ENCODE measurements at regions of chr17 and their contacts with region 1.

Region 1: GRCh38 chr17:32783602-32784001 is 93.3 kb downstream of the MYO1D start:
- DNase-seq: peak; percentile 75
- H3K4me3 ChIP-seq: no peak overlapping the region
- H3K27ac ChIP-seq: no peak overlapping the region
- H3K4me1 ChIP-seq: peaks cover 4% of the 10 kb centered on the region
- H3K27me3 ChIP-seq: no peaks in the 10 kb centered on the region
- CTCF ChIP-seq: peak; percentile 37 to 53
- POLR2A ChIP-seq: no peak

Region 2: GRCh38 chr17:32596628-32597027 is 187.0 kb before region 1 on chr17:
- CTCF ChIA-PET with region 1: no interaction called
- POLR2A ChIA-PET with region 1: no interaction called
- dilution Hi-C with region 1: no loop called
- intact Hi-C with region 1: no loop called
- DNase-seq: no peak
- H3K4me3 ChIP-seq: no peak overlapping the region
- H3K27ac ChIP-seq: no peak overlapping the region
- H3K4me1 ChIP-seq: no peaks in the 10 kb centered on the region
- H3K27me3 ChIP-seq: no peaks in the 10 kb centered on the region
- CTCF ChIP-seq: no peak
- POLR2A ChIP-seq: no peak

Region 3: GRCh38 chr17:32769839-32770238 is 13.8 kb before region 1 on chr17:
- CTCF ChIA-PET with region 1: interaction called, 29 read pairs
- POLR2A ChIA-PET with region 1: no interaction called
- dilution Hi-C with region 1: no loop called
- intact Hi-C with region 1: no loop called
- DNase-seq: no peak
- H3K4me3 ChIP-seq: no peak overlapping the region
- H3K27ac ChIP-seq: no peak overlapping the region
- H3K4me1 ChIP-seq: peaks cover 24% of the 10 kb centered on the region
- H3K27me3 ChIP-seq: no peaks in the 10 kb centered on the region
- CTCF ChIP-seq: no peak
- POLR2A ChIP-seq: no peak

Region 4: GRCh38 chr17:32803544-32803943 is 19.9 kb after region 1 on chr17:
- CTCF ChIA-PET with region 1: interaction called, 21 read pairs
- POLR2A ChIA-PET with region 1: no interaction called
- dilution Hi-C with region 1: no loop called
- intact Hi-C with region 1: no loop called
- DNase-seq: peak; percentile 89
- H3K4me3 ChIP-seq: no peak overlapping the region
- H3K27ac ChIP-seq: peak overlapping the region; percentile 63
- H3K4me1 ChIP-seq: peaks cover 84% of the 10 kb centered on the region
- H3K27me3 ChIP-seq: no peaks in the 10 kb centered on the region
- CTCF ChIP-seq: no peak
- POLR2A ChIP-seq: no peak

Region 5: DNA sequence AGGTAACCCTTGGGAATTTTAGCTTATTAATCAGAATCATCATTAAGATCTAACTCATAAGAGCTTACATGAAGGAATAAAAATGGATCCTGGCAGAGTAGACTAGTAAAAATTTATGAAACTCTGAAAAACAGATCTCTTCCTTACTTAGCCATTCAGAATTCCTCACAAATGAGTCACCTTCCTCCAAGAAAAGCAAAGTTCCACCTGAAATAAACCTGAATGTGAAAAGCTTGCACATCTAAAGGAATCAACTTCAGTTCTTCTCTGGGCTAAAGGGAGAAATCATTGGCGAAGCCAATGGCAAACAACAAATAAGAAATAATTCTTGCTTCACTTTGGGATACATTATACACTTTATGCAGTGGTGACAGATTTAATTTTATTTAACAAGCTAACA is 70.6 kb after region 1 on chr17:
- CTCF ChIA-PET with region 1: interaction called, 10 read pairs
- POLR2A ChIA-PET with region 1: no interaction called
- dilution Hi-C with region 1: no loop called
- intact Hi-C with region 1: no loop called
- DNase-seq: peak; percentile 74
- H3K4me3 ChIP-seq: peak overlapping the region in 1 of 3 experiments; percentile 30
- H3K27ac ChIP-seq: peak overlapping the region; percentile 38
- H3K4me1 ChIP-seq: peaks cover 26% of the 10 kb centered on the region
- H3K27me3 ChIP-seq: no peaks in the 10 kb centered on the region
- CTCF ChIP-seq: no peak
- POLR2A ChIP-seq: no peak

Region 6: GRCh38 chr17:32882734-32883133 is 99.1 kb after region 1 on chr17:
- CTCF ChIA-PET with region 1: interaction called, 420 read pairs
- POLR2A ChIA-PET with region 1: no interaction called
- dilution Hi-C with region 1: no loop called
- intact Hi-C with region 1: loop called (anchors 1 kb)
- DNase-seq: no peak
- H3K4me3 ChIP-seq: no peak overlapping the region
- H3K27ac ChIP-seq: no peak overlapping the region
- H3K4me1 ChIP-seq: peaks cover under 1% of the 10 kb centered on the region
- H3K27me3 ChIP-seq: peaks cover 5% of the 10 kb centered on the region in 2 experiments
- CTCF ChIP-seq: no peak
- POLR2A ChIP-seq: no peak

Region 7: DNA sequence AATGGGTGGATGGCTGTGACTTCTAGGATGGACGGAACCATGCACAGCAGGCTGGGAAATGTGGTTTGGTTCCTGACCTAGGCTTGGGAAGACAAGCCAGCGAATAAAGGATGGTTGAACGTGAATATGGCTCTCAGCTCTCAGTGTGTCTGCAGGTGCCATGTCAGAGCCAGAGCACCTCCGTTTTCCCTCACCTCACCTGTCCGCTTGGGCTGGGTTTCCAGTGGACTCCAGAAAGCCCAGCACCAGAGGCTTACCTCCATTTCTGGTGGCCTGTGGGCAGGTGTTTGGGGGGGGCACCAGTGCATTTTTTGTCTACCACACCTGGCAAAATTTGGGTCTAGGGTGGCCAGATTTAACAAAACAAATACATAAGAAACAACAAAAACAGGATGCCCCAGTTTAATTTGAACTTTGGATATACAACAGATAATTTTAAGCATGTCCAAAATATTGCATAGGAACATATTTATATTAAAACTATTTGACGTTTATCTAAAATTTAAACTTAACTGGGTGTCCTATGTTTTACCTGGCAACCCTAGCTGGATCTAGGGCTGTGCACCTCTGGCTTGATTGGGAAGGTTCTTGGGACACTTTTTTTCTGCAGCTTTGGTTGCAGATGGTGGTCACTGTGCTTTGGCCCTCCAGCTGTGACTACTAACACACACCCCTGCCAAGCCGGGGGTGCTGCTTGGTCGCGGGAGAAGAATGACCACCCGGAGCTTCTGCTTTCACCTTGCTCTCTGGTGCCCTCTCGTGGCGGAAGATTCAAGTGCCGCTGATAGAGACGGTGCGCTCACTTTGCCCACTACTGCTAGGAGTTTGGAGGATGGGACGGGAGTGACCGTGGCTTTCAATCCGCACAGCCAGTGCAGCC is 214.4 kb after region 1 on chr17:
- CTCF ChIA-PET with region 1: interaction called, 32 read pairs
- POLR2A ChIA-PET with region 1: no interaction called
- dilution Hi-C with region 1: no loop called
- intact Hi-C with region 1: loop called (anchors 2 kb)
- DNase-seq: peak; percentile 67
- H3K4me3 ChIP-seq: no peak overlapping the region
- H3K27ac ChIP-seq: no peak overlapping the region
- H3K4me1 ChIP-seq: no peaks in the 10 kb centered on the region
- H3K27me3 ChIP-seq: no peaks in the 10 kb centered on the region
- CTCF ChIP-seq: peak; percentile 86 to 95
- POLR2A ChIP-seq: no peak

Region 8: GRCh38 chr17:33169580-33170285 is 386.1 kb after region 1 on chr17:
- CTCF ChIA-PET with region 1: no interaction called
- POLR2A ChIA-PET with region 1: no interaction called
- dilution Hi-C with region 1: no loop called
- intact Hi-C with region 1: no loop called
- DNase-seq: no peak
- H3K4me3 ChIP-seq: no peak overlapping the region
- H3K27ac ChIP-seq: no peak overlapping the region
- H3K4me1 ChIP-seq: no peaks in the 10 kb centered on the region
- H3K27me3 ChIP-seq: no peaks in the 10 kb centered on the region
- CTCF ChIP-seq: no peak
- POLR2A ChIP-seq: no peak

Measured in endothelial cell of umbilical vein (primary cell).